ENCODE measurements at regions of chr1 and their contacts with region 1.

Region 1: DNA sequence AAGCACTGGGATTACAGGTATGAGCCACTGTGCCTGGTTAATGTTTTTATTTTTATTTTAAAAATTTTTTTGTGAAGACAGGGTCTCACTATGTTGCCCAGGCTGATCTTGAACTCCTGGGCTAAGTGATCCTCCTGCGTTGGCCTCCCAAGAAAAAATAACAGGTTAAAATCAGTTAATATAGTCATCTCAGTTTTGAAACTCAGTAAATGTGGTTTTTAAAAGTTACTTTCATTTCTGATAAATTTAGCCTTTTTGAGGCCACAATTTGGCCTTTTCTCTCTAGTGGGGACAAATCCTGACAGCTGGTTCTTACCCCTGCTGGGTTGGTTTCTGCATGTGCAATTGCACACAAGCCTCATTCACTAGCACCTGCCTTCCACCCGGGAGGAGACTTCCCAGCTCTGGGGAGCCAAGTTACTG is 13.3 kb downstream of the PMF1 start:
- DNase-seq: no peak
- H3K4me3 Mint-ChIP-seq: peak overlapping the region; percentile 53
- H3K27ac Mint-ChIP-seq: peak overlapping the region; percentile 79
- H3K4me1 Mint-ChIP-seq: peaks cover 52% of the 10 kb centered on the region
- H3K27me3 Mint-ChIP-seq: no peaks in the 10 kb centered on the region

Region 2: DNA sequence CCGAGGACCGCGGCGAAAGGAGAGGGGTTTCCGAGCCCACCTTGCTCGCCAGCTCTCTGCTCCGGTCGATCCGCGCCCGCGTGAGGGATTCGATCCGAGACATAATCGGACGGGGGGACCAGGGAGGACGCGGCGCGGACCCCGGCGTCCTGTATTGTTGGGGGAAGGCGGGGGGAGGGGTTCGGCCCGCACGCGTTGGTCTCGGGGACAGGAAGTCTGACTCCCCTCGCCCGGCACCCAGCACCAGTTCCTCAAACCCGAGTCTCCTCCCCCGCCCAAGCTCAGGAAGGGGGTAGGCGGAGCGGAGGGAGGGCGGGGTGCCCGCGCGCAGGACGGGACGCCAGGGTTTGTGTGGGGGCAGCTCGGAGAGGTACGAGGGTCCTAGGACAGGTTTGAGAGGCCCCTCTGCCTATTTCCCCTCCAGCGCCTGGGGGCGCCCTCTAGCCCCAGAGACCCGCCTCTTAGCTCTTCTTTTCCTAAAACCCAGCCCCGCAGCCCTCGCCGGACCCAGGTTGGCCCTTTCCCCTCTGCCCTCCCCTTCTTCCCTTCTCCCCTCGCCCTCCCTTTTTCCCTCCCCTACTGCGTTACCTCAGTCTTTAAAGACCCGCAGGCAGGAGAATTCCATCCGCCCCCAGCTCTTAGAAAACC is 247.7 kb before region 1 on chr1 and contains the start of gene ARHGEF2:
- intact Hi-C with region 1: loop called (anchors 10 kb)
- DNase-seq: peak; percentile 71
- H3K4me3 Mint-ChIP-seq: peak within 1 kb of the TSS; percentile 92
- H3K27ac Mint-ChIP-seq: peak within 1 kb of the TSS; percentile 95
- H3K4me1 Mint-ChIP-seq: peaks cover 78% of the 10 kb centered on the region
- H3K27me3 Mint-ChIP-seq: no peaks in the 10 kb centered on the region
- total RNA-seq, gene ARHGEF2: 221 and 222 TPM in 2 replicates

Region 3: DNA sequence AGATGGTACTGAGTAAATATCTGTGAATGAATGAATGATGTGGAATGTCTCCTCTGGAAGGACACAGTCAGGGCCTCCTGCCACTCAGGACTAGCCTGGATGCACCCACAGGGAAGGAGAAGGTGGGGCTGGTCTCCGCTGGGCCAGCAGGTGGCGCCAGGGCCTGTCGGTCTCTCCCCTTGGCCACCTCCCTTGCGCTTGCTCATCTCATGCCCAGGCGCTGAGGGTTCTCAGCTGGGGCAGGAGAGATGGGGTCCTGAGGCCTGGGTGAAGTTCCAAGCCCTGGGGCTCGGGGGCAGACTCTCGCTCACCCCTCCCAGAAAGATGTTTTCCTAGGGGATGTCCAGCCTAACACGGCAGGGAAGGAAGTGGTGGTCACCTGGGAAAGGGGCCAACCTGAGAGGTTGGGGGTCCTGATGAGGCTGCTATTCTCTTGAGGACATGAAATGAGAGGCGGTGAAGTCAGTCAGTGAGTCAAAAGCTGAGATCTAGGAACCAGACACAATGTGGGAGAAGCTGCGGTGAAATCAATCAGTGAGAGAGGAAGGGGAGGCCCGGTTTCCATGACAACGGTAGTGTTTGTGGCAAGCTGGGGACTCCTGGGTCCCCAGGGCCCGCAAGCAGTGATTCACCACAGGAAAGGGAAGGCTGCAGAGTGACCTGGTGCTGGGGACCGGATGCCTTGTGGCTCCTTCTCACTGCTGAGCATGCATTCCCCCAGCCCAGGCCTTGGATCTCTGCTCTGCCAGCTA is 129.3 kb before region 1 on chr1:
- intact Hi-C with region 1: loop called (anchors 1 kb)
- DNase-seq: peak; percentile 82
- H3K4me3 Mint-ChIP-seq: peak overlapping the region; percentile 23
- H3K27ac Mint-ChIP-seq: peak overlapping the region; percentile 88
- H3K4me1 Mint-ChIP-seq: peaks cover 43% of the 10 kb centered on the region
- H3K27me3 Mint-ChIP-seq: peaks cover 25% of the 10 kb centered on the region

Region 4: GRCh38 chr1:156146020-156146768 is 79.9 kb before region 1 on chr1:
- intact Hi-C with region 1: loop called (anchors 1 kb)
- DNase-seq: peak; percentile 35
- H3K4me3 Mint-ChIP-seq: peak overlapping the region; percentile 64
- H3K27ac Mint-ChIP-seq: peak overlapping the region; percentile 90
- H3K4me1 Mint-ChIP-seq: peaks cover 43% of the 10 kb centered on the region
- H3K27me3 Mint-ChIP-seq: no peaks in the 10 kb centered on the region

Region 5: GRCh38 chr1:156193488-156194299 is 32.4 kb before region 1 on chr1 and contains the start of gene SLC25A44:
- intact Hi-C with region 1: loop called (anchors 1 kb)
- DNase-seq: peak; percentile 97
- H3K4me3 Mint-ChIP-seq: peak within 1 kb of the TSS; percentile 94
- H3K27ac Mint-ChIP-seq: peak within 1 kb of the TSS; percentile 87
- H3K4me1 Mint-ChIP-seq: peaks cover 54% of the 10 kb centered on the region
- H3K27me3 Mint-ChIP-seq: no peaks in the 10 kb centered on the region
- total RNA-seq, gene SLC25A44: 67.6 and 79.3 TPM in 2 replicates

Region 6: DNA sequence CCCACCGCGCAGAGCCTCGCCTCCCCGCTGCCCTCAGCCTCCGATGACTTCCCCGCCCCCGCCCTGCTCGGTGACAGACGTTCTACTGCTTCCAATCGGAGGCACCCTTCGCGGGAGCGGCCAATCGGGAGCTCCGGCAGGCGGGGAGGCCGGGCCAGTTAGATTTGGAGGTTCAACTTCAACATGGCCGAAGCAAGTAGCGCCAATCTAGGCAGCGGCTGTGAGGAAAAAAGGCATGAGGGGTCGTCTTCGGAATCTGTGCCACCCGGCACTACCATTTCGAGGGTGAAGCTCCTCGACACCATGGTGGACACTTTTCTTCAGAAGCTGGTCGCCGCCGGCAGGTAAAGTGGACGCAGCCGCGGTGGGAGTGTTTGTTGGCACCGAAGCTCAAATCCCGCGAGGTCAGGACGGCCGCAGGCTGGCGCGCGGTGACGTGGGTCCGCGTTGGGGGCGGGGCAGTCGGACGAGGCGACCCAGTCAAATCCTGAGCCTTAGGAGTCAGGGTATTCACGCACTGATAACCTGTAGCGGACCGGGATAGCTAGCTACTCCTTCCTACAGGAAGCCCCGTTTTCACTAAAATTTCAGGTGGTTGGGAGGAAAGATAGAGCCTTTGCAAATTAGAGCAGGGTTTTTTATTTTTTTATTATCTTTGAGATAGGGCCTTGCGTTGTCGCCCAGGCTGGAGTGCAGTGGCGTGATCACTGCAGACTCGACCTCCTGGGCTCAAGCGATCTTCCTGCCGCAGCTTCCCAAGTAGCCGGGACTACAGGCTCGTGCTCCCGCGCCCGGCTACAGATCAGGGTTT is 13.1 kb before region 1 on chr1 and contains the start of gene PMF1:
- intact Hi-C with region 1: loop called (anchors 1 kb)
- DNase-seq: peak; percentile 93
- H3K4me3 Mint-ChIP-seq: peak within 1 kb of the TSS; percentile 92
- H3K27ac Mint-ChIP-seq: peak within 1 kb of the TSS; percentile 97
- H3K4me1 Mint-ChIP-seq: peaks cover 53% of the 10 kb centered on the region
- H3K27me3 Mint-ChIP-seq: no peaks in the 10 kb centered on the region
- total RNA-seq, gene PMF1: 105 and 111 TPM in 2 replicates

Region 7: GRCh38 chr1:156268336-156268735 is 42.2 kb after region 1 on chr1:
- intact Hi-C with region 1: no loop called
- DNase-seq: no peak
- H3K4me3 Mint-ChIP-seq: no peak overlapping the region
- H3K27ac Mint-ChIP-seq: no peak overlapping the region
- H3K4me1 Mint-ChIP-seq: no peaks in the 10 kb centered on the region
- H3K27me3 Mint-ChIP-seq: no peaks in the 10 kb centered on the region

Region 8: GRCh38 chr1:156295391-156295947 is 69.3 kb after region 1 on chr1 and contains the start of gene GLMP:
- intact Hi-C with region 1: no loop called
- DNase-seq: peak; percentile 48
- H3K4me3 Mint-ChIP-seq: peak within 1 kb of the TSS; percentile 90
- H3K27ac Mint-ChIP-seq: peak within 1 kb of the TSS; percentile 86
- H3K4me1 Mint-ChIP-seq: peaks cover 15% of the 10 kb centered on the region
- H3K27me3 Mint-ChIP-seq: no peaks in the 10 kb centered on the region
- total RNA-seq, gene GLMP: 17.2 and 20.3 TPM in 2 replicates

Region 9: DNA sequence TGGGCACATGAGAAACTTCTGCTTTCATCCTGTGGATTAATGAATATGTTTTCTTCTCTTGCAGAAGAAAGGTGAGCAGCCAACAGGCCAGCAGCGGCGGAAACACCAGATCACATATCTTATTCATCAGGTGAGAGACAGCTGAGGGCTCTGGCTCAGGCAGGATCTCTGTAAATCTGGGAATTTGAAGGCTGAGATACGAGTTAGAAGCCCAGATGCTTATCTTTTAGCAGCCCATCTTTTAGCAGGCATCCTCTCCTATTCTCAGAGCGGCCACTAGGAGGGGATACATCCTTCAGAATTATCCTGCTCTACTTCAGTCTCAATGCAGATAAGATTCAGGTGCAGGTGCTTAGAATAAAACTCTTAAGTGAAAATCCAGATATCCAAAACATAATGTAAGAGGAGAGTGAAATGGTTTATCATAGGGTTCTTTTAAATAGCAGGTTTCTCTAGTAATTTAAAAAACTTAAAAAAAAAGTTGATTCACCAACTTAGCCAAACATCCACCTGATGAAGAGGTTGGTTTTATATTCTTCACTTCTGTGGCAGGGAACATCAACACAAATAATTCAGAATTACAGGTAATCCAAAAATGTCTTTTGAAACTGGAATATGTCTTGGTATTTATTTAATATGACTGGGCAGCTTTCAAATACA is 571.2 kb after region 1 on chr1:
- intact Hi-C with region 1: no loop called
- DNase-seq: peak; percentile 43
- H3K4me3 Mint-ChIP-seq: no peak overlapping the region
- H3K27ac Mint-ChIP-seq: no peak overlapping the region
- H3K4me1 Mint-ChIP-seq: peaks cover 27% of the 10 kb centered on the region
- H3K27me3 Mint-ChIP-seq: no peaks in the 10 kb centered on the region

Measured in activated T-helper 1 cell treated with anti-CD3 and anti-CD28 coated beads, Interleukin-12 subunit alpha, Interleukin-12 subunit beta, Interleukin-2, Interleukin-4 antibody, amounts not matched to agents 30 ng/mL and 10 ng/mL and 1 ng/mL, durations not matched to agents 14 hours and 24 hours and 36 hours (primary cell).